ENCODE measurements at regions of chr4 and their contacts with region 1.

Region 1: DNA sequence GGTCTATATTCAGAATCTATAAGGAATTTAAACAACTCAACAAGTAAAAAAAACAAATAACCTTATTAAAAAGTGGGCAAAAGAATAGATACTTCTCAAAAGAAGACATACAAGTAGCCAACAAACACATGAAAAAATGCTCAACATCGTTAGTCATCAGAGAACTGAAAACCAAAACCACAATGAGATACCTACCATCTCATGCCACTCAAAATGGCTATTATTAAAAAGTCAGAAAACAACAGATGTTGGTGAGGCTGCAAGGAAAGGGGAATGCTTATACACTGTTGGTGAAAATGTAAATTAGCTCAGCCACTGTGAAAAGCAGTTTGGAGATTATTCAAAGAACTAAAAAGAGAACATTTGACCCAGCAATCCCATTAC is 201.6 kb downstream of the QDPR start:
- DNase-seq: no peak
- ATAC-seq: no peak
- H3K4me3 ChIP-seq: no peak overlapping the region
- H3K27ac ChIP-seq: no peak overlapping the region
- H3K4me1 ChIP-seq: no peaks in the 10 kb centered on the region
- H3K27me3 ChIP-seq: no peaks in the 10 kb centered on the region
- CTCF ChIP-seq: no peak
- POLR2A ChIP-seq: no peak

Region 2: DNA sequence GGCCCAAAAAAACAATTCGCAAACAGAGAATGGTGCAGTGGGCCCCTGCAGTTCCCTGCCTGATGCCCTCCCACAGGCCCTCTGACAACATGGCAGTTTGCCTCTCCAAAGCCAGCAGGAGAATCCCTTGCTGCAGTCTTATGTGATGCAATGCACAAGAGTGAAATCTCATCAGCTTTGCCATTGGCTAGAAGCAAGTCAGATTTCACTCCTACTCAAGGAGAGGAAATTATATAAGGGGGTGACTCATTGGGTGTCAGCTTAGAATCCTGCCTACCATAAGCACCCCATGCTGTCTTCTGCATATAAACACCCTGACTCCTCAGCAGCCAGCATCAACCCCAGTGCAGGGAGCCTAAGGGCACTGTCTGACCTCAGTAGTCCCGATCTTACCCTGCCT is 254.5 kb before region 1 on chr4:
- intact Hi-C with region 1: no loop called
- DNase-seq: no peak
- ATAC-seq: no peak
- H3K4me3 ChIP-seq: no peak overlapping the region
- H3K27ac ChIP-seq: no peak overlapping the region
- H3K4me1 ChIP-seq: peaks cover 0 to 18% (median 0%) of the 10 kb centered on the region in 12 donors
- H3K27me3 ChIP-seq: no peaks in the 10 kb centered on the region
- CTCF ChIP-seq: no peak
- POLR2A ChIP-seq: no peak

Region 3: GRCh38 chr4:17168571-17168970 is 141.7 kb before region 1 on chr4:
- intact Hi-C with region 1: loop called in 2 of 10 experiments (anchors 10 kb)
- DNase-seq: peak in 3 of 5 donors; percentile 32 to 64 (median 38)
- ATAC-seq: peak; percentile 36 to 74 (median 54)
- H3K4me3 ChIP-seq: no peak overlapping the region
- H3K27ac ChIP-seq: peak overlapping the region in 8 of 12 donors; percentile 13 to 69 (median 32)
- H3K4me1 ChIP-seq: peaks cover 0 to 36% (median 26%) of the 10 kb centered on the region in 12 donors
- H3K27me3 ChIP-seq: no peaks in the 10 kb centered on the region
- CTCF ChIP-seq: no peak
- POLR2A ChIP-seq: no peak

Region 4: DNA sequence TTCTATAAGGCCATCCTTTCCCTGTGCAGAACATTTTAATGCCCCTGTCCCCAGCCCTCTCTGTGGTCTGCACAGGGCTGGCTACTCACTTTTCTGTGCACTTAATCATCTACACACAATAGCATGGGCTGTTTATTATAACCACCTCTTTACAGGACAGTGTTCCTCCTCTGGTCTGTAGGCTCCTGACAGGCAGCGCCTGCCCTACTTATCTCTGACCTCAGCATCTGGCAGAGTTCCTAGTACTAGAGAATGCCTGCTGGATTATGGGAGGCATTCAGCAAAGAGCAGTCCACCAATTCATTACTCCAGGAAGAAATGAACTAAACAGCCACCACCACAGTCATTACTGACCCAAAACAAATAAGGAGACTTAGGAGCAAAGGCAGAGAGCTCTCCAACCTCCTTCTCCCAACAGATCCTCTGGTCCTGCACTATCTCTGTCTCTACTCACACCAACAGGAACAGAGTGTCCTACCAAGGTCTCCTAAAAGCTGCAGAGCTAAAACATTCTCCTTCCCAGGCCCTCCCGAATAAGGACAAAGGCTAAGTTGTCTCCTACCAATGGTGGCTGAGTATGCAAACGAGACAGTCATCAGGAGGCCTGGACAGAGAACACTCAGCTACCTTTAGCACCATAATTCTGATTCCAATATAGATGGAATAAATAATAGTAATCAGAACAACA is 77.6 kb before region 1 on chr4:
- intact Hi-C with region 1: loop called in 1 of 10 experiments (anchors 10 kb)
- DNase-seq: peak in 4 of 5 donors; percentile 65 to 73 (median 68)
- ATAC-seq: peak; percentile 95 to 98 (median 96)
- H3K4me3 ChIP-seq: no peak overlapping the region
- H3K27ac ChIP-seq: peak overlapping the region; percentile 61 to 87 (median 80)
- H3K4me1 ChIP-seq: peaks cover 0 to 27% (median 16%) of the 10 kb centered on the region in 12 donors
- H3K27me3 ChIP-seq: no peaks in the 10 kb centered on the region
- CTCF ChIP-seq: no peak
- POLR2A ChIP-seq: no peak

Measured in heart left ventricle (tissue), 16 donors.